ENCODE measurements at regions of chr19 and their contacts with region 1.

Region 1: DNA sequence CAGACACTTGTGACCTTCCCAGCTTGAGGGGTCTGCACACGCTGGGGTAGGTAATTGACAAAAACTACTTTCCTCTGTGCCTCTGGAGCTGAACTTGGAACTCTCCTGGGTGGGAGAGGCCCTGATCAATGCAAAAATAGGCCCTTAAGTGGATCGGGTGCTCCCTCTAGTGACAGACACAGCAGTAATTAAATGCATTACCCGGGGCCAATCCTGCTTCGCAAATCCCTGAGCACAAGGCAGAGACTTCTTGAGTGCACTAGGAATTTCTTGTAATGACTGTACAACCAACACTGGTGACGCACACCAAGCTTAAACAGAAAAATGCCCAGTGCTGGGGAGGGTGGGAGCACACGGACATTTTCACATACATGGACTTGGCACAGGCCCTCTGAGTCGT is 10.6 kb upstream of the UBE2S start:
- DNase-seq: peak; percentile 37
- H3K4me3 Mint-ChIP-seq: no peak overlapping the region
- H3K27ac Mint-ChIP-seq: no peak overlapping the region
- H3K4me1 Mint-ChIP-seq: peaks cover 8% of the 10 kb centered on the region
- H3K27me3 Mint-ChIP-seq: peaks cover 13% of the 10 kb centered on the region

Region 2: DNA sequence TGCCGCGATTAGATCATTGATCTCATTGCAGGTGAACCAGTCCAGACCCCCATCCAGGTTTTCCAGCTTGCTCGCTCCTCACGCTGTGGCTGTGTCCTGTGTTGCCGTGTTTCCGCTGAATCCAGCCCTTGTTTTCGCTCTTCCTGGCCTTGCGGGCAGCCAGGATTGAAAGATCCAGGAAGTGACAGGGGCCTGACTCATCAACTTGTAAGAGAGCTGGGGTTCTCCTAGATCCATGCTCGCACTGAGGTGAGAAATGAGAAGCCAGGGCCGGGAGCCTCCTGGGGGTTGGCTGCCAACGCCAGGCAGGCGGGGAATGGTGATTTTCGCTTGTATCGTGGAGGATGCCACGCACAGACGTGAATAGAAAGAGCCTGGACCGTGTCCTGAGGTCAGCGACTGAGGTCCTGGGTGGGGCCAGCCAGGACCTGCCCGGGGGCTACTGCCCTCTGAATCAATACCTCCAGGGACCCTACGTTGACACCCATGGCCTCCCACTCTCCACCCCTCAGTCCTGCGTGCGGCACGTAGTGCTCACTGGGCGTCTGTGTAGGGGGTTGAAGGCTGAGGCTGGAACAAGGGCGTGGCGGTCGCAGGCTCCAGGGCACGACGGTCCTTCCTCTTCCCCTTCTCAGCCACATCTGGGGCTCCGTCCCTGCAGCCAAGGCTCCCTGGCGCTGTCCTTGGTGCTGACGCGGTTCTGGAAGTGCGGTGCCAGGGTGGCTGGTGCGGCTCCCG is 201.6 kb before region 1 on chr19:
- intact Hi-C with region 1: loop called (anchors 5 kb)
- DNase-seq: peak; percentile 31
- H3K4me3 Mint-ChIP-seq: peak overlapping the region; percentile 63
- H3K27ac Mint-ChIP-seq: peak overlapping the region; percentile 67
- H3K4me1 Mint-ChIP-seq: peaks cover 11% of the 10 kb centered on the region
- H3K27me3 Mint-ChIP-seq: peaks cover 11% of the 10 kb centered on the region

Region 3: GRCh38 chr19:55275851-55276719 is 142.1 kb before region 1 on chr19:
- intact Hi-C with region 1: no loop called
- DNase-seq: no peak
- H3K4me3 Mint-ChIP-seq: no peak overlapping the region
- H3K27ac Mint-ChIP-seq: no peak overlapping the region
- H3K4me1 Mint-ChIP-seq: peaks cover 35% of the 10 kb centered on the region
- H3K27me3 Mint-ChIP-seq: no peaks in the 10 kb centered on the region

Region 4: GRCh38 chr19:55289117-55289796 is 128.9 kb before region 1 on chr19:
- intact Hi-C with region 1: loop called (anchors 1 kb)
- DNase-seq: no peak
- H3K4me3 Mint-ChIP-seq: no peak overlapping the region
- H3K27ac Mint-ChIP-seq: no peak overlapping the region
- H3K4me1 Mint-ChIP-seq: peaks cover 5% of the 10 kb centered on the region
- H3K27me3 Mint-ChIP-seq: peaks cover 3% of the 10 kb centered on the region

Region 5: GRCh38 chr19:55301459-55302317 is 116.5 kb before region 1 on chr19:
- intact Hi-C with region 1: loop called (anchors 1 kb)
- DNase-seq: peak; percentile 91
- H3K4me3 Mint-ChIP-seq: peak overlapping the region; percentile 88
- H3K27ac Mint-ChIP-seq: peak overlapping the region; percentile 88
- H3K4me1 Mint-ChIP-seq: peaks cover 17% of the 10 kb centered on the region
- H3K27me3 Mint-ChIP-seq: no peaks in the 10 kb centered on the region

Measured in activated T-helper 1 cell treated with anti-CD3 and anti-CD28 coated beads, Interleukin-12 subunit alpha, Interleukin-12 subunit beta, Interleukin-2, Interleukin-4 antibody, amounts not matched to agents 30 ng/mL and 10 ng/mL and 1 ng/mL, durations not matched to agents 14 hours and 24 hours and 36 hours (primary cell).